Heart right ventricle (tissue), 16 donors: ENCODE measurements at regions of chr2 and their contacts with region 1.

Region 1: DNA sequence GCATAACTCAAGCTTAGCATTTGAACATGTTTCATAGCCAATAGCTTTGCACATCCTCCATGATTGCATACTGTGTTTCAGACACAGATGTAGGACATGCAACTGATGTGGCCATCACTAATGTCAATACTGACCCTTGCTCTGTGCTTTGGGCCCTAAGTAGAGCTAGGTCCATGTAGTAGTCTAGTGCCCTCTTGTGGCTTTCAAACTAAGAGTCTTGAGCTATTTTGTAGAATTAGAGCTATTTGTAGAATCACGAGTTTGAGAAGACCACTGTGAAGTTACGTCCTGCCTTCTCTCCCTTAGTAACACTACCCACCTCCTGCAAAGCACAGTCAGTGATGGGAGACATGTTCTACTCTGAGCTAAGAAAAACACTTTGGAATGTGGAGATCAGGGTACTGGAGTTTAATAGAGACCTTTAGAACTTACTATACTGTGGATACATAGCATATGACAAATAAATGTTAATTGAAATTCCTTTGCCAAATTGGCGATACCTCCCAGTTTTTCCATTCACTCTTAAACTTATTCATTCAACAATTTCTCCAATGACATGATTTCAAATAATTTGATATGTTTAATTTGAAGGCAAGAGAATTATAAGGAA is 306.5 kb upstream of the TNP1 start:
- DNase-seq: peak in 1 of 2 donors; percentile 41
- ATAC-seq: peak; percentile 43 to 83 (median 69)
- H3K4me3 ChIP-seq: no peak overlapping the region
- H3K27ac ChIP-seq: no peak overlapping the region
- H3K4me1 ChIP-seq: peaks cover 0 to 23% (median 5%) of the 10 kb centered on the region in 9 donors
- H3K27me3 ChIP-seq: peaks cover 0 to 74% (median 0%) of the 10 kb centered on the region in 7 donors
- CTCF ChIP-seq: peak; percentile 42 to 78 (median 64)

Region 2: DNA sequence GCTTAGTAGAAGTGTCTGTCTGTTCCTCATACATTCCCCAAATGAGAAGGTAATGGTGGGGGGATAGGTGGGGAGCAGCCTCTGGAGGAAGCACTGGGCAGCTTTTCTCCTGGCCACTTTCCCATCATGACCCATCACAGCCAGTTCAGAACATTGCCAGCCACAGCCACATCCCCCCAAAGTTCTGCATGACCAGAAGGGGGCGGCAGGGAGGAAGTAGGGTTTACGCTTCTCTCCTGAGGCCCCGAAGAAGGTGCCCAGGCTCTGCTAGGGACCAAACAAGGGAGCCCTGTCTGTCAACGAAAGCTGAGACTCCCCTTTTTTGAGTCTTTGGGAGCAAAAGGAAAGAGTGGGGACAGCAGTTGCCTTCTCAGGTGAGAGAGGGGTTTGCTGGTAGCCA is 478.7 kb before region 1 on chr2:
- intact Hi-C with region 1: loop called in 3 of 10 experiments (anchors 5 to 10 kb)
- DNase-seq: no peak
- ATAC-seq: no peak
- H3K4me3 ChIP-seq: no peak overlapping the region
- H3K27ac ChIP-seq: peak overlapping the region in 1 of 10 donors; percentile 2
- H3K4me1 ChIP-seq: peaks cover 11 to 90% (median 62%) of the 10 kb centered on the region in 9 donors
- H3K27me3 ChIP-seq: peaks cover 0 to 49% (median 0%) of the 10 kb centered on the region in 7 donors
- CTCF ChIP-seq: peak in 7 of 9 donors; percentile 8 to 41 (median 29)

Region 3: GRCh38 chr2:216989340-216990129 is 176.8 kb before region 1 on chr2:
- intact Hi-C with region 1: loop called in 1 of 10 experiments (anchors 10 kb)
- DNase-seq: no peak
- ATAC-seq: peak in 3 of 8 donors; percentile 23 to 53 (median 26)
- H3K4me3 ChIP-seq: no peak overlapping the region
- H3K27ac ChIP-seq: no peak overlapping the region
- H3K4me1 ChIP-seq: peaks cover 0 to 37% (median 8%) of the 10 kb centered on the region in 9 donors
- H3K27me3 ChIP-seq: no peaks in the 10 kb centered on the region
- CTCF ChIP-seq: peak in 4 of 9 donors; percentile 9 to 27 (median 25)

Region 4: GRCh38 chr2:217138284-217138683 is 28.1 kb before region 1 on chr2:
- intact Hi-C with region 1: loop called in 1 of 10 experiments (anchors 1 kb)
- DNase-seq: no peak
- ATAC-seq: no peak
- H3K4me3 ChIP-seq: no peak overlapping the region
- H3K27ac ChIP-seq: no peak overlapping the region
- H3K4me1 ChIP-seq: no peaks in the 10 kb centered on the region
- H3K27me3 ChIP-seq: no peaks in the 10 kb centered on the region
- CTCF ChIP-seq: no peak